Mammary epithelial cell (primary cell): ENCODE measurements at regions of chr22 and their contacts with region 1.

Region 1: GRCh38 chr22:31107178-31107893 is at the start of gene SELENOM:
- DNase-seq: peak; percentile 98
- H3K4me3 ChIP-seq: peak within 1 kb of the TSS; percentile 66 to 77 (median 67)
- H3K27ac ChIP-seq: peak within 1 kb of the TSS; percentile 82
- H3K4me1 ChIP-seq: peaks cover 7% of the 10 kb centered on the region
- H3K27me3 ChIP-seq: no peaks in the 10 kb centered on the region
- CTCF ChIP-seq: peak; percentile 74 to 97
- total RNA-seq, gene SELENOM: 24.6 to 38.7 TPM

Region 2: GRCh38 chr22:30947816-30948454 is 159.4 kb before region 1 on chr22:
- CTCF ChIA-PET with region 1: interaction called, 17 read pairs
- dilution Hi-C with region 1: no loop called
- in situ Hi-C with region 1: no loop called
- intact Hi-C with region 1: loop called (anchors 1 kb)
- DNase-seq: peak; percentile 64
- H3K4me3 ChIP-seq: no peak overlapping the region
- H3K27ac ChIP-seq: peak overlapping the region; percentile 78
- H3K4me1 ChIP-seq: peaks cover 40% of the 10 kb centered on the region
- H3K27me3 ChIP-seq: no peaks in the 10 kb centered on the region
- CTCF ChIP-seq: peak; percentile 60 to 70

Region 3: DNA sequence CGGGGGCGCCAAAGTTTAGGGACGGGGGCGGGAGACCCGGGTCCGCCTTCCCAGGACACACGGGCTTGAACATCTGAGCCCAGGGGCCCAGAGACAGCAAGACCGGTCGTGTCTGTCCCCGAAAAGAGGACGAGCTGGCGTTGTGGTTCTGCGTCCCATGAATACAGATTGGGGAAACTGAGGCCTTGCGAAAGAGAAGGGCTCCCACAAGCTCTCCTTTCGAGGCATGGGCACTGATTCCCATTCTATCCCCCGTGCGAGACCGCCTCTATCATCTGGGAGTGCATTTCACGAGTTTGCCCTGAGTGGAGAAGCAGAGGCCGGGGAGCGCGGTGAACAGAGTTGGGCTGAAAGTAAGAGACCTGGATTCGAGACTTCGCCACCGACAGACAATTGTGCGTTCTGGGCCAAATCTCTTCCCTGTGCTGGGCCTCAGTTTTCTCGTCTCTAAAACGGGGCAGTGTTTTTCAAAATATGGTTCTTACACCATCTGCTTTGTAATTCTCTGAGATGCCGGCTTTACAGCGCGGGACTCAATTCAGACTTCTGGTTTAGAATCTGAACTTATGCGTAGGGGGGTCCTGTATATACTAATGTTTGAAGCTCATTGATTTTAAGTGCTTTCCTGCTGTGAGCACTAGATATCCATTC is 53.1 kb after region 1 on chr22:
- CTCF ChIA-PET with region 1: interaction called, 12 read pairs
- dilution Hi-C with region 1: no loop called
- in situ Hi-C with region 1: no loop called
- intact Hi-C with region 1: no loop called
- DNase-seq: no peak
- H3K4me3 ChIP-seq: peak overlapping the region; percentile 72 to 95 (median 89)
- H3K27ac ChIP-seq: peak overlapping the region; percentile 79
- H3K4me1 ChIP-seq: peaks cover 21% of the 10 kb centered on the region
- H3K27me3 ChIP-seq: no peaks in the 10 kb centered on the region
- CTCF ChIP-seq: no peak

Region 4: GRCh38 chr22:31272522-31273446 is 165.4 kb after region 1 on chr22:
- CTCF ChIA-PET with region 1: interaction called, 4 read pairs
- dilution Hi-C with region 1: no loop called
- in situ Hi-C with region 1: no loop called
- intact Hi-C with region 1: loop called (anchors 1 kb)
- DNase-seq: peak; percentile 47
- H3K4me3 ChIP-seq: no peak overlapping the region
- H3K27ac ChIP-seq: no peak overlapping the region
- H3K4me1 ChIP-seq: no peaks in the 10 kb centered on the region
- H3K27me3 ChIP-seq: no peaks in the 10 kb centered on the region
- CTCF ChIP-seq: peak; percentile 62 to 76

Region 5: GRCh38 chr22:31399211-31400028 is 292.1 kb after region 1 on chr22 and contains the start of gene DRG1:
- CTCF ChIA-PET with region 1: no interaction called
- dilution Hi-C with region 1: no loop called
- in situ Hi-C with region 1: no loop called
- intact Hi-C with region 1: loop called (anchors 5 kb)
- DNase-seq: peak; percentile 92
- H3K4me3 ChIP-seq: peak within 1 kb of the TSS; percentile 74 to 86 (median 83)
- H3K27ac ChIP-seq: peak within 1 kb of the TSS; percentile 77
- H3K4me1 ChIP-seq: peaks cover 5% of the 10 kb centered on the region
- H3K27me3 ChIP-seq: no peaks in the 10 kb centered on the region
- CTCF ChIP-seq: no peak
- total RNA-seq, gene DRG1: 64.8 to 65.3 TPM